B cell (primary cell): ENCODE measurements at regions of chr2 and their contacts with region 1.

Region 1: DNA sequence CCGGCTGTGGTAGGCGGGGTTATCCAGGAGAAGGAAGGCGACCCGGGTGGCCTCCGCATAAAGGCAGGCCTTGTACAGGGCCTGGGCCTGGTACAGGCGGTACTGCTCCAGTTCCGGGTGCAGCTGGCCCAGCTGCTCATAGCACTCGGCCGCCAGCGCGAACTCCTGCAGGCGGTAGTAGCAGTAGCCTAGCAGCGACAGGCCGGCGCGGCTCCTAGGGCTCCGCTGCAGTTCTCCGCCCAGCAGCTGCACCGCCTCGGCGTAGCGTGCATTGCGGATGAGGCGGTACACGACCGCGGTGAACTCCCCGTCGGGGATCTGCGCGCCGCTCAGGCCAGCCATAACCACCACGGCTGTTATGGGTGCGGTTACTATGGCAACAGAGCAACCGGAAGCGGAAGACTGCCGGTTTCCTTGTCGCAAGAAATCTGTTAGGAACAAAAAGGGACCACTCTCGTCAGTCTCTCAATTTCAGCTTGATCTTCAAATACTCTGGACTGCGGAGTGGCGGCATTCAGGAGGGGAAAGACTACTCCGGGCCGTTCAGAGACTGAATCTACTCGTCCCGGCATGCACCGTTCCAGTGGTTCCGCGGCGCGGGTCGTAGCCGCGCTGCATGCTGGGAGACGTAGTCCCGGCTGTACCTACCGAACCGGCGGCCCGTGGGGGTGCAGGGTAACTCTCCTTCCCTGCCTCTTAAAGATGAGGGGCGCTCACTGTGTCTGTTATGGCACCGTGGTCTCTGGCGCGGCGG is 160.0 kb downstream of the AGPS start:
- DNase-seq: peak; percentile 98
- ATAC-seq: peak; percentile 92
- H3K4me3 ChIP-seq: peak overlapping the region; percentile 63 to 98 (median 94)
- H3K4me3 Mint-ChIP-seq: peak overlapping the region; percentile 97
- H3K27ac ChIP-seq: peak overlapping the region; percentile 99 to 100
- H3K27ac Mint-ChIP-seq: peak overlapping the region; percentile 100
- H3K4me1 ChIP-seq: peaks cover 9 to 13% of the 10 kb centered on the region in 2 donors
- H3K4me1 Mint-ChIP-seq: peaks cover 19% of the 10 kb centered on the region
- H3K27me3 ChIP-seq: no peaks in the 10 kb centered on the region
- H3K27me3 Mint-ChIP-seq: no peaks in the 10 kb centered on the region
- CTCF ChIP-seq: no peak

Region 2: DNA sequence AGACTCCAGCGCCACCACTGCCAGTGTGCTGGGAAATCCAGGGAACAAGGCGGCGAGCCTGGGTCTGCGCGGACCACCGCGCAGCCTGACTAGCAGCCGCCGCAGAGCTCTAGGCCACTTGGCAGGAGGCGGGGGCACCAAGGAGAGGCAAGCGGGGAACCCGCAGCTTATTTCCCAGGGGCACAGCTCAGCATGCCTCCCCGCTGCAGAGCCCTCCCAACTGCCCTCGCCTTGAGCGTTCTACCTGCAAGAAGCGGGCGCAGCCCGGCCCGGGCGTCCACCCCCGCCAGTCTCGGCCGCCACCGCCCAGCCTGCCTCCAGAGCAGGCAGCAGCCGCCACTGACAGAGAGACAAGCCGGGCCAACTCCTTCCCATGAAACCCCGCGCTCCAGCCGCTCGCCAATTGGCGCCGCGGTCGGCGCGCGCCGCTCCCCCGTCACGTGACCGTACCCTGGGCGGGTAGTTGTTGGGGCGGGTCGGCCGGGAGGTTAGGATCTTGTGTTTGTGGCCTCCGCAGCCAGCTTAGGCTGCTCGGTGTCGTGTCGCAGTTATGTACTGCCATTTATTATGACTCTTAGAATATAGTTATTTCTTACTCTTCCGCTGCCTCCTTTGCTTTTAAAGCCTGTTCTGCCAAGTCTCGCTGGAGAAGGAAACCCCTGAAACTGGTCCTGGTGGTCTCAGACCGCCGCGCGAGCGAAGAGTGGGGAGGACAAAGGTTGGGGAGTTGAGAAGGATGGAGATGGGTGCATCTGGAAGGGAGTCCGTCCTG is 1550.5 kb before region 1 on chr2 and contains the start of gene LNPK:
- CTCF ChIA-PET with region 1: no interaction called
- POLR2A ChIA-PET with region 1: no interaction called
- intact Hi-C with region 1: loop called (anchors 5 kb)
- DNase-seq: peak; percentile 90
- ATAC-seq: peak; percentile 91
- H3K4me3 ChIP-seq: peak within 1 kb of the TSS; percentile 36 to 84 (median 78)
- H3K4me3 Mint-ChIP-seq: peak within 1 kb of the TSS; percentile 85
- H3K27ac ChIP-seq: peak within 1 kb of the TSS; percentile 48 to 76
- H3K27ac Mint-ChIP-seq: peak within 1 kb of the TSS; percentile 18
- H3K4me1 ChIP-seq: peaks cover 12 to 14% of the 10 kb centered on the region in 2 donors
- H3K4me1 Mint-ChIP-seq: peaks cover 17% of the 10 kb centered on the region
- H3K27me3 ChIP-seq: no peaks in the 10 kb centered on the region
- H3K27me3 Mint-ChIP-seq: no peaks in the 10 kb centered on the region
- CTCF ChIP-seq: no peak
- total RNA-seq, gene LNPK: 15.9 and 16.7 TPM in 2 replicates

Region 3: GRCh38 chr2:177148477-177149154 is 404.0 kb before region 1 on chr2:
- CTCF ChIA-PET with region 1: no interaction called
- POLR2A ChIA-PET with region 1: no interaction called
- intact Hi-C with region 1: loop called (anchors 5 kb)
- DNase-seq: peak; percentile 85
- ATAC-seq: peak; percentile 92
- H3K4me3 ChIP-seq: peak overlapping the region; percentile 42 to 94 (median 67)
- H3K4me3 Mint-ChIP-seq: peak overlapping the region; percentile 92
- H3K27ac ChIP-seq: no peak overlapping the region
- H3K27ac Mint-ChIP-seq: peak overlapping the region; percentile 2
- H3K4me1 ChIP-seq: peaks cover 9 to 13% of the 10 kb centered on the region in 2 donors
- H3K4me1 Mint-ChIP-seq: peaks cover 11% of the 10 kb centered on the region
- H3K27me3 ChIP-seq: peaks cover 0 to 13% (median 10%) of the 10 kb centered on the region in 4 experiments
- H3K27me3 Mint-ChIP-seq: peaks cover 36% of the 10 kb centered on the region
- CTCF ChIP-seq: peak; percentile 99

Region 4: DNA sequence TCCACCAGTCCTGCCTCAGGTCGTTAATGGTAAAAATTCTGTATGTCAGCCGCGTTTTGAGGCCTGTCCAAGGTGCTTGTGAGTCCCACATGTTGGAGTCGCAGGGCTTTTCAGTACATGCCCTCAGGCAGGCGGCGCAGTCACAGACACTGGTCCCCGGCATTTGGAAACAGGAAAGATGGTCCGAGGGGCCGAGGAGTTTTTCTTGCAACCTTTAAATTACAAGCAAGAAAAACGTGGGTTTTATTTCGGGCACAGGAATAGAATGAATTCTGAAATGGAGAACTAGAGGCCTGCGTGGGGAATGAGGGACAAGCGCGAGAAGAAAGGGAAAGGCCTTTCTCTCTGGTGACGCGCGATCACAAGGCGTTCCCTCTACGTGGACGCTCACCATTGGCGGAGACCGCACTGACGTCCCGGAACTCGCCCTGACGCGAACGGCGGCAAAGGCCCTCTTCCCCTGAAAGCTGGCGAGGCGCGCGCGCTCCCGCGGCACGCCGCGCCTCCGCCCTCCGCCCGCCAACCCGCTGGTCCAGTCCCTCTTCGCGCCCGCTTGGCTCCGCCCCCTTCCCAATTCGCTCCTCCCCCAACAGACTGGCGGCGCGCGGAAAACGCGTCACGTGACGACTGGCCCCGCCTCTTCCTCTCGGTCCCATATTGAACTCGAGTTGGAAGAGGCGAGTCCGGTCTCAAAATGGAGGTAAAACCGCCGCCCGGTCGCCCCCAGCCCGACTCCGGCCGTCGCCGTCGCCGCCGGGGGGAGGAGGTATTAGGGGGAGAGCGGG is 340.3 kb before region 1 on chr2 and contains the start of gene HNRNPA3:
- CTCF ChIA-PET with region 1: no interaction called
- POLR2A ChIA-PET with region 1: no interaction called
- intact Hi-C with region 1: loop called (anchors 5 kb)
- DNase-seq: peak; percentile 100
- ATAC-seq: peak; percentile 86
- H3K4me3 ChIP-seq: peak within 1 kb of the TSS; percentile 81 to 97 (median 94)
- H3K4me3 Mint-ChIP-seq: peak within 1 kb of the TSS; percentile 91
- H3K27ac ChIP-seq: peak within 1 kb of the TSS; percentile 99 to 100
- H3K27ac Mint-ChIP-seq: peak within 1 kb of the TSS; percentile 98
- H3K4me1 ChIP-seq: peaks cover 32 to 37% of the 10 kb centered on the region in 2 donors
- H3K4me1 Mint-ChIP-seq: peaks cover 47% of the 10 kb centered on the region
- H3K27me3 ChIP-seq: no peaks in the 10 kb centered on the region
- H3K27me3 Mint-ChIP-seq: no peaks in the 10 kb centered on the region
- CTCF ChIP-seq: no peak
- total RNA-seq, gene HNRNPA3: 197 and 200 TPM in 2 replicates

Region 5: GRCh38 chr2:177392373-177393202 is 160.0 kb before region 1 on chr2 and contains the start of gene AGPS:
- CTCF ChIA-PET with region 1: interaction called, 4 read pairs
- POLR2A ChIA-PET with region 1: no interaction called
- intact Hi-C with region 1: loop called (anchors 1 kb)
- DNase-seq: peak; percentile 66
- ATAC-seq: peak; percentile 91
- H3K4me3 ChIP-seq: peak within 1 kb of the TSS; percentile 70 to 83 (median 77)
- H3K4me3 Mint-ChIP-seq: peak within 1 kb of the TSS; percentile 91
- H3K27ac ChIP-seq: peak within 1 kb of the TSS in 1 of 2 donors; percentile 47
- H3K27ac Mint-ChIP-seq: peak within 1 kb of the TSS; percentile 87
- H3K4me1 ChIP-seq: peaks cover 19 to 28% of the 10 kb centered on the region in 2 donors
- H3K4me1 Mint-ChIP-seq: peaks cover 42% of the 10 kb centered on the region
- H3K27me3 ChIP-seq: no peaks in the 10 kb centered on the region
- H3K27me3 Mint-ChIP-seq: no peaks in the 10 kb centered on the region
- CTCF ChIP-seq: no peak
- total RNA-seq, gene AGPS: 23.2 and 25.5 TPM in 2 replicates

Region 6: GRCh38 chr2:177618255-177619253 is 66.0 kb after region 1 on chr2:
- CTCF ChIA-PET with region 1: no interaction called
- POLR2A ChIA-PET with region 1: no interaction called
- intact Hi-C with region 1: loop called (anchors 1 kb)
- DNase-seq: peak; percentile 97
- ATAC-seq: peak; percentile 88
- H3K4me3 ChIP-seq: peak overlapping the region; percentile 62 to 98 (median 93)
- H3K4me3 Mint-ChIP-seq: peak overlapping the region; percentile 98
- H3K27ac ChIP-seq: peak overlapping the region; percentile 91 to 100
- H3K27ac Mint-ChIP-seq: peak overlapping the region; percentile 100
- H3K4me1 ChIP-seq: peaks cover 9 to 10% of the 10 kb centered on the region in 2 donors
- H3K4me1 Mint-ChIP-seq: peaks cover 11% of the 10 kb centered on the region
- H3K27me3 ChIP-seq: peaks cover 0 to 2% (median 0%) of the 10 kb centered on the region in 4 experiments
- H3K27me3 Mint-ChIP-seq: no peaks in the 10 kb centered on the region
- CTCF ChIP-seq: no peak